Posterior vena cava (tissue), 2 donors: ENCODE measurements at regions of chr7 and their contacts with region 1.

Region 1: DNA sequence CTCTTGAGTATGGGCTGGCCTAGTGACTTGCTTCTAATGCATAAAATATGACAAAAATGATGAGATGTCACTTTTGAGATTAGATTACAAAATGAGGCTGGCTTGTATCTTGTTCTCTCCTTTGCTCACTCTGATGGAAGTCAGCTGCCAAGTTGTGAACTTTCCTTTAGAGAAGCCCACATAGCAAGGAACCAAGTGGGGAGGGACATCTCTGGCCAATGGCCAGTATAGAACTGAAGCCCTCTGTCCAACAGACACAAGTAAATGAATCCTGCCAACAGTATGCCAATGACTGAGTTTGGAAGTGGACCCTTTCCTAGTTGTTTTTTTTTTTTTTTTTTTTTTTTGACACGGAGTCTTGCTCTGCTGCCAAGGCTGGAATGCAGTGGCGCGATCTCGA is 3.4 kb downstream of the ZC3HC1 start:
- DNase-seq: no peak

Region 2: DNA sequence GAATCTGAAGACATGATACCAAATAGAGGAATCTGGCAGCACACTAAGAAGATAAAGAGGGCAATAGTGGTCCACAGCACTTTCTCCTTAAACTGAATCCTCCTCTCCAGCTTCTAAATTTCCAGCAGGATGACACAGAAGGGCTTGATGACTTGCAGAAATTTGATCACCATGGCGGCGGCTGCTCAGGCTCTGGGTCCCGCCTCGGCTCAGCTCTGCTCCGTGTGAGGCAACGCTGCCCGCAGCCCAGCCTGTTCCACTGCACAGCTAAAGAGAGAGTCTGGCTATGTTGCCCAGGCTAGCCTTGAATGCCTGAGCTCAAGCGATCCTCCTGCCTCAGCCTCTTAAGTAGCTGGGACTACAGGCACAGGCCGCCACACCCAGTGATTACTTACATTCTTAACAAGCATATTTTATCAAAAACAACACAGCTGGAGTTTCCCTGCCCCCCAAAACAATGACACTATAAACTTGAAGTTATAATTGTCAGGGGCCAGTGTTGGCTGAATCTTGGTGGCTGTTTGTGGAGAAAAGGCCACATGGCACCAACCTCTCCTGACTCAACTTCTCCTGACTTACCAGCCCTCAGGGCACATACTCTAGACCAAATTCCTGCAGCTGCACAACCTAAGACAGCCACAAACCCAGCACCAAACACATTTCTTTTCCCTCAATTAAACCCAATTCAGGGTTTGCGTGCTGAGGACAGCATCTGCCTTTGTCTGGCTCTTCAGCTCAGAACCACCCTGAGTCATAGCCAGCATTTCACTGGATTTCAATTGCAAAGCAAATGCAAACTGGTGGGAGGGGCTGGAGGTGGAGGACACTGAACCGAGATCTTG is 981.3 kb before region 1 on chr7:
- intact Hi-C with region 1: loop called in 1 of 2 experiments (anchors 5 kb)
- DNase-seq: no peak

Region 3: GRCh38 chr7:129958643-129959470 is 89.0 kb before region 1 on chr7:
- intact Hi-C with region 1: no loop called
- DNase-seq: no peak

Region 4: GRCh38 chr7:130409067-130409713 is 361.4 kb after region 1 on chr7:
- intact Hi-C with region 1: no loop called
- DNase-seq: no peak